HCT116 (cell line): ENCODE measurements at regions of chr13 and their contacts with region 1.

Region 1: GRCh38 chr13:42969558-42970172 is 22.4 kb downstream of the EPSTI1 start:
- DNase-seq: peak; percentile 42
- ATAC-seq: peak; percentile 93
- H3K4me3 ChIP-seq: no peak overlapping the region
- H3K27ac ChIP-seq: no peak overlapping the region
- H3K4me1 ChIP-seq: peaks cover 4 to 12% of the 10 kb centered on the region in 2 experiments; a peak in 3 of 4 replicates
- H3K27me3 ChIP-seq: no peaks in the 10 kb centered on the region
- CTCF ChIP-seq: peak; percentile 68 to 84 (median 83)
- POLR2A ChIP-seq: no peak
- RAD21 ChIP-seq: peak; percentile 57

Region 2: DNA sequence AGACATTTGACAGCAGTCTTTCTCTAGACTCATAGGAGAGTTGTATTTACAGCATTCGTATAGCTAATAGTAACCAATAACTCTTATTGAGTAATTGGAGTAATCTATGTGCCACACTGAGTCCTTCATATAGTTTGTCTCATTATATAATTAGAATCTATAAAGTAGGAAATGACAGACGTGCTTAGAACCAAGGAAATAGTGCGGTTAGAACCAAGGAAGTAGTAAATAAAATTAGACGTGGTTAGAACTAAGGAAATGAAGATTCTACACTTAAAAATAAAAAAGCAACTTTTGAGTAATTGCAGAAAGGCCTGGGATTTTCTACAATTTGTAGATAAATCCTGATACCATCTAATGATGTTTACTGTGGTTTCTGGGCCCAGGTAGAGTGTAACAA is 503.5 kb before region 1 on chr13:
- CTCF ChIA-PET with region 1: no interaction called
- POLR2A ChIA-PET with region 1: no interaction called
- RAD21 ChIA-PET with region 1: no interaction called
- intact Hi-C with region 1: no loop called
- DNase-seq: no peak
- ATAC-seq: no peak
- H3K4me3 ChIP-seq: no peak overlapping the region
- H3K27ac ChIP-seq: no peak overlapping the region
- H3K4me1 ChIP-seq: no peaks in the 10 kb centered on the region
- H3K27me3 ChIP-seq: no peaks in the 10 kb centered on the region
- CTCF ChIP-seq: no peak
- POLR2A ChIP-seq: no peak
- RAD21 ChIP-seq: no peak

Region 3: GRCh38 chr13:43132257-43132656 is 162.6 kb after region 1 on chr13:
- CTCF ChIA-PET with region 1: no interaction called
- POLR2A ChIA-PET with region 1: no interaction called
- RAD21 ChIA-PET with region 1: no interaction called
- intact Hi-C with region 1: loop called (anchors 5 kb)
- DNase-seq: peak; percentile 35
- ATAC-seq: peak; percentile 99
- H3K4me3 ChIP-seq: no peak overlapping the region
- H3K27ac ChIP-seq: no peak overlapping the region
- H3K4me1 ChIP-seq: peaks cover 3 to 8% of the 10 kb centered on the region in 2 experiments; a peak in 2 of 4 replicates
- H3K27me3 ChIP-seq: peaks cover 17% of the 10 kb centered on the region
- CTCF ChIP-seq: peak; percentile 15 to 62 (median 34); a peak in 3 of 6 replicates
- POLR2A ChIP-seq: no peak
- RAD21 ChIP-seq: peak; percentile 72